ENCODE measurements at regions of chr7 and their contacts with region 1.

Region 1: GRCh38 chr7:74656837-74657691 is 454 bp upstream of the GTF2I start:
- DNase-seq: peak; percentile 92 to 99
- H3K4me3 ChIP-seq: peak overlapping the region; percentile 82 to 97 (median 88)
- H3K27ac ChIP-seq: peak overlapping the region; percentile 98
- H3K4me1 ChIP-seq: peaks cover 7 to 21% (median 13%) of the 10 kb centered on the region in 4 experiments
- H3K27me3 ChIP-seq: no peaks in the 10 kb centered on the region
- CTCF ChIP-seq: no peak
- EP300 ChIP-seq: no peak
- POLR2A ChIP-seq: peak; percentile 85 to 92
- RAD21 ChIP-seq: 0 out of 4 replicates have a peak, but pooled peaks of 1 of the 2 experiments have one; percentile 3

Region 2: GRCh38 chr7:74627661-74628411 is 29.2 kb before region 1 on chr7:
- CTCF ChIA-PET with region 1: interaction called, 3 read pairs
- POLR2A ChIA-PET with region 1: interaction called, 25 read pairs
- DNase-seq: peak in 1 of 2 experiments; percentile 63
- H3K4me3 ChIP-seq: peak overlapping the region in 3 of 4 experiments; percentile 2 to 14 (median 11); a peak in 2 of 8 replicates
- H3K27ac ChIP-seq: peak overlapping the region; percentile 81
- H3K4me1 ChIP-seq: peaks cover 0 to 7% (median 2%) of the 10 kb centered on the region in 4 experiments; a peak in 4 of 7 replicates
- H3K27me3 ChIP-seq: no peaks in the 10 kb centered on the region
- CTCF ChIP-seq: no peak
- EP300 ChIP-seq: no peak; a peak in 1 of 3 replicates
- POLR2A ChIP-seq: peak in 1 of 2 experiments; percentile 76; a peak in 2 of 3 replicates
- RAD21 ChIP-seq: no peak

Region 3: DNA sequence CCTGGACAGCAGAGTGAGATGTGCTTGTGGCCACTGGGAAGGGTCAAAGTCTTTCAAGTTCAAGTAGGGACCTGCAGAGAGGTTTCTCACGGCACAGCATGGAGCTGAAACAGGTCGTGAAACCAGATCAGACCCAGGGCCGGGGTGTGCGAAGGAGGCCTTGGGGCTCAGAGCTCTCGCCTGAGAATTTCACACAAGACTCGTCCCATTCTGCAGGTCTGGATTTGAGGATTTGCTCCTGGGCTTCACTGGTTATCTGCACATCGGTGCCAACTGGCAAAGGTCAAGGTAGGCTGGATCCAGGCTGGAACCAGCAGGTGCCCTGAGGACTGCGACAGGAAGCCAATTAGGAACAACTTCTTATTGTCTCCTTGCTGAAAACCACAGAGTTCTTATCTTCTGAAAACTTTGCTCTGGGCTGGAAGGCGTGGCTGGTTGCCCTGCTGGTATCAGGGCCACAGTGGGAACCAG is 23.6 kb before region 1 on chr7:
- CTCF ChIA-PET with region 1: interaction called, 3 read pairs
- POLR2A ChIA-PET with region 1: interaction called, 25 read pairs
- DNase-seq: no peak
- H3K4me3 ChIP-seq: no peak overlapping the region
- H3K27ac ChIP-seq: no peak overlapping the region
- H3K4me1 ChIP-seq: no peaks in the 10 kb centered on the region
- H3K27me3 ChIP-seq: no peaks in the 10 kb centered on the region
- CTCF ChIP-seq: no peak
- EP300 ChIP-seq: no peak
- POLR2A ChIP-seq: no peak
- RAD21 ChIP-seq: no peak

Region 4: DNA sequence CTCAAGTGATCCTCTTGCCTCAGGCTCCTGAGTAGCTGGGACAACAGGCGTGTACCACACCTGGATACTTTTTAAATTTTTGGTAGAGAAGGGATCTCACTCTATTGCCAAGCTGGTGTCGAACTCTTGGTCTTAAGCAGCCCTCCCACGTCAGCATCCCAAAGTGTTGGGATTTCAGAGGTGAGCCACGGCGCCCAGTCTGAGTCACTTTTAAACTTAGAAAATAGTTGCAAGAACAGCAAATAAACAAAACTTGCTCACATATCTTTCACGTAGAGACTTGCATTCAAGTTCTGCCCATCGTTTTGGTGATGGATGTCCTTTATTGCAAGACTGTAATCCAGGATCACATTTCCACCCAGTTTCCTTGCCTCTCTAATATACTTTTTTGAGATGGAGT is 17.1 kb after region 1 on chr7:
- CTCF ChIA-PET with region 1: interaction called, 9 read pairs
- POLR2A ChIA-PET with region 1: interaction called, 14 read pairs
- DNase-seq: no peak
- H3K4me3 ChIP-seq: no peak overlapping the region
- H3K27ac ChIP-seq: no peak overlapping the region
- H3K4me1 ChIP-seq: no peaks in the 10 kb centered on the region
- H3K27me3 ChIP-seq: no peaks in the 10 kb centered on the region
- CTCF ChIP-seq: no peak
- EP300 ChIP-seq: no peak
- POLR2A ChIP-seq: no peak
- RAD21 ChIP-seq: no peak